SK-N-SH (cell line): ENCODE measurements at regions of chr12 and their contacts with region 1.

Region 1: DNA sequence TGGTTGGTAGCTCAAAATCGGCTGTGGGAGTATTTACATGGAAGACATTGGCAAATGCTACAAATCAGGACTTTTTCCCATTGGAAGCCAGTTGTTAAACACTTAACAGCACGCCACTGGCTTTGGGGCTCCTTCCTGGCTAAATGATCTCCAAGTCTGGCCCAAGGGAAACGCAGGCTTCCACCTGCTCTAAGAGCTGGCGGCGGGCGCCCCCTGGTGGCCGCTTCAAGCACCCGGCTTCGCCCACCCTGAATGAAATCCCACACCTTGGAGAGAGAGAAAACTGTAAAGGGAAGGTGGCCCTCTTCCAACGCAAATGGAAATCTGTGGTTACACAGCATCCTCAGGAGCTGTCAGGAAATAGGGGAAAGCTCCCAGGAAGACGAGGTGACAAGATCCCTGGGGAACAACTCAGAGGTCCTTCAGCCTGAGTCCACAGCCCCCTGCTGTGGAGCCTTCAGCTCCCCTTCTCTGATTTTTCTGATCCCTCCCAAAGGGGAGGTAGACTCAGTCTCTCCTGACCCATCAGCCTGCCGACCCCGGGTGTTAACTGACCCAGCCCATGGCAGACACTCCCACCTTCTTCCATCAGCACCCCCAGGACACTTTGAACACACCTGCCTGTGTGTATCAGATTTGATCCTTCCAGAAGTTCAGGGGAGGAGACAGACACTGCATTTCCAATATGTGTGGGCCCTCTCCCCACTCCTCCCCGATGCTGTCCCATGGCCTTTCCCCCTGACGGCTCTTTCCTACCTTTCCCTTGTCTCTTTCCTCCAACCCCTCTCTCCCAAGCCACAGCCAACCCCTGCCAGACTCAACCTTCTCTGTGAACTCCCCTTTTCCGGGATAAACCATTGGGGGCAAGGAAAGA is 15.4 kb downstream of the SELPLG start:
- DNase-seq: peak; percentile 86
- H3K4me3 ChIP-seq: peak overlapping the region in 1 of 2 experiments; percentile 30; a peak in 1 of 4 replicates
- H3K27ac ChIP-seq: no peak overlapping the region
- H3K4me1 ChIP-seq: no peaks in the 10 kb centered on the region; a peak in 2 of 4 replicates
- H3K27me3 ChIP-seq: no peaks in the 10 kb centered on the region
- CTCF ChIP-seq: peak; percentile 98
- EP300 ChIP-seq: no peak
- RAD21 ChIP-seq: peak; percentile 99

Region 2: DNA sequence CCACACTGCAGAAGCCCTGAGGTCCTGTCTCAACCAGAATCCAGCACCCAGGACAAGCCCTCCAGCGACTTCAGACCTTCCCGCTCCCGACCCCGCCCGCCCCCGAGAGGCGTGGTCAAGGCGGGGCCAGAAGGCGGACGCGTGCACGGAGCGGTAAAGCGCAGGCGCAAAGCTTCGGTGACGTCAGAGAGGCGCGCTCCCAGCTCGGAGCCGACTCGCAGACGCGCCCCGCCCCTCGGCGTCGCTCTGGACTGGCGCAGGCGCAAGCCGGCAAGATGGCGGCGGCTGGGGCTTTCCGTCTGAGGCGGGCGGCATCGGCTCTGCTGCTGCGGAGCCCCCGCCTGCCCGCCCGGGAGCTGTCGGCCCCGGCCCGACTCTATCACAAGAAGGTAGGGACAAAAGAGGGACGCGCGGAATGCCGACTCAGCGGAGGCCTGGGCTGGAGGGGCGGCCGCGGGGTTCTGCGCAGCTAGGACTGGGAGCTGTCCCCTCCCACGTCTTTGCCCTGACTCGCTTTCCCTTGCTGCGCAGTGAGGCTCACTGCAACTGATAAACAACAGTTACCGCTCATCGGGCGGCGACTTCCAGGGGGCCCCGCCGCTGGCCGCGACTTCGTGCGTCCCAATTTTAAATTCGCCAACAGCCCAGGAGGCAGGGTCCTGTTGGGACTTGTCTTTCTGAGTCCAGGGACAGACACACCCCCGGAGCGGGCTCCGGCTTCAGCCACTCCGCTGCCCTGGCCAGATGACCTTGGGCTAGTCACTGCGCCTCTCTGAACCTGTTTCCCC is 55.8 kb before region 1 on chr12 and contains the start of gene ISCU:
- CTCF ChIA-PET with region 1: interaction called, 503 read pairs
- POLR2A ChIA-PET with region 1: interaction called, 3 read pairs
- DNase-seq: peak; percentile 97
- H3K4me3 ChIP-seq: peak within 1 kb of the TSS; percentile 67 to 97
- H3K27ac ChIP-seq: peak within 1 kb of the TSS; percentile 81 to 95
- H3K4me1 ChIP-seq: peaks cover 33 to 43% of the 10 kb centered on the region in 2 experiments
- H3K27me3 ChIP-seq: no peaks in the 10 kb centered on the region
- CTCF ChIP-seq: no peak
- EP300 ChIP-seq: no peak
- RAD21 ChIP-seq: no peak
- polyA plus RNA-seq, gene ISCU: 165 and 166 TPM in 2 replicates

Region 3: GRCh38 chr12:108576660-108577234 is 41.6 kb before region 1 on chr12:
- CTCF ChIA-PET with region 1: interaction called, 503 read pairs
- POLR2A ChIA-PET with region 1: no interaction called
- DNase-seq: no peak
- H3K4me3 ChIP-seq: no peak overlapping the region
- H3K27ac ChIP-seq: no peak overlapping the region
- H3K4me1 ChIP-seq: no peaks in the 10 kb centered on the region
- H3K27me3 ChIP-seq: no peaks in the 10 kb centered on the region
- CTCF ChIP-seq: no peak
- EP300 ChIP-seq: no peak
- RAD21 ChIP-seq: no peak

Region 4: GRCh38 chr12:108583991-108584390 is 34.3 kb before region 1 on chr12:
- CTCF ChIA-PET with region 1: interaction called, 38 read pairs
- POLR2A ChIA-PET with region 1: no interaction called
- DNase-seq: no peak
- H3K4me3 ChIP-seq: no peak overlapping the region
- H3K27ac ChIP-seq: no peak overlapping the region
- H3K4me1 ChIP-seq: peaks cover 0 to 10% of the 10 kb centered on the region in 2 experiments; a peak in 1 of 4 replicates
- H3K27me3 ChIP-seq: no peaks in the 10 kb centered on the region
- CTCF ChIP-seq: no peak
- EP300 ChIP-seq: no peak
- RAD21 ChIP-seq: no peak

Region 5: DNA sequence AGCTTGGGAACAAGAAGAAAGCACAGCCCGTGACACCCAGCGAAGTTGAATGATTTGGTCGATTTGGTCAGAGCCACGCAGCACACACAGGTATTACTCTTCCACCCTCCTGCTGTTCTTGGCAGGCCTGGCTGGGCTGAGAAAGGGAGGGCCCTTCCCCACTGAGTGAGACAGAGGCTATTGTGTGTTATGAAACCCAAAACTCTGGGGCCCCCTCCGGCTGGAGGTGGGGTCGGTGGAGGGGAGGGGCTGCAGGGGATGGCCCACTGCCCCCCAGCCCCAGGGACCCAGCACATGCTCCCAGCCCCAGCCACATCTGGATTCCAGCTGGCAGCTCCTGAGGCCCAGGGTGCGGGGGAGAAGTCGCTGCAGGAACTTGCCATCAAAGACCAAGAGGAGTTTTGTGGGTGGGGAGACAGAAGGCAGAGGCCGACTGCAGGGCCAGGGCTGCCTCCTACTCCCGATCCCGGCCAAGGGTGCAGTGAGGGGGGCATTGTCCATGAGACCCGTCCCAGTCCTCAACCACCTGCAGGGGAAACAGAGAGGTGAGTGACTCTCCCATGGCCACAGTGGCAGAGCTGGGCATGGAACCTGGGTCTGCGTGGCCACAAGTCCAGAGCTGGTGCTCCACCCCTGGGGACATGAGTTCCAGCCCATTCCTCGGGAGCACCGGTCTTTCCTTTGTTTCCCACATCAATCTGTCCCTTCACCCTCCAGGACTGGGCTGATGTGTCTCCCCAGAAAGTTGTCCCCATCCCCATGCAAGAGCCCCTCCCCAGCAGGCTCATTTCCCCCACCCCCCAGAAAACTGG is 29.1 kb before region 1 on chr12:
- CTCF ChIA-PET with region 1: interaction called, 38 read pairs
- POLR2A ChIA-PET with region 1: no interaction called
- DNase-seq: peak; percentile 77
- H3K4me3 ChIP-seq: no peak overlapping the region
- H3K27ac ChIP-seq: peak overlapping the region in 1 of 2 experiments; percentile 29; a peak in 1 of 4 replicates
- H3K4me1 ChIP-seq: peaks cover 0 to 20% of the 10 kb centered on the region in 2 experiments; a peak in 1 of 4 replicates
- H3K27me3 ChIP-seq: no peaks in the 10 kb centered on the region
- CTCF ChIP-seq: no peak
- EP300 ChIP-seq: no peak
- RAD21 ChIP-seq: no peak

Region 6: DNA sequence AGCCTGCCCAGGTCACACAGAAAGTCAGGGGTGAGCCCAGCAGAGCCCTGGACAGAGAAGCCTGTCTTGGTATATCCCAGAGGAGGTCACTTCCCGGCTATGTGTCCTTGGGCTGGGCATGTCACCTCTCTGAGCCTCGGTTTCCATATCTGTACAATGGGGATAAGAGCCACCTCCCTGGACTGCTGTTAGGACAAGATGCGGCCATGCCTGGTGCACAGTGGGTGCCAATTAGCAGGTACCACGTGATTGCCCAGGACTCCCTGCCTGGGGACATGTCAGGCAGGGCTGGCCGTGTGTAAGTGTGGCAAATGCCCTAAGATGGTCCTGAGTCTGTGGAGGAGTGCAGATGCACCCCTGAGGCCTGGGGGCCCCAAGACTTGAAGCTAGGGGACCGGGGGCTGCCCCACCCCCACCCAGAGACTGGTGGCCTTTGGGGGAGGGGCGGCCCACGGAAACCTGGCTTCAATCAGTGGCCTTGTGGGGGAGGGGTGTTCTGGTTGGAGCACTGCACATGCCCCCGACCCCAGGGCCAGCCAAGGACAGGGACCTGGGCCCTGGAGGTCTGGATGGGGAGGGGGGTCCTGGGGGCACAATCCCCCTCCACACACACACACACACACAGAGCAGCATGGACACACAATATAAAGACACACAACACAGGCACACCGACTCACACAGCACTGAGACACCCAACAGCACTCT is 21.3 kb before region 1 on chr12:
- CTCF ChIA-PET with region 1: interaction called, 23 read pairs
- POLR2A ChIA-PET with region 1: no interaction called
- DNase-seq: peak; percentile 81
- H3K4me3 ChIP-seq: peak overlapping the region; percentile 45 to 60
- H3K27ac ChIP-seq: peak overlapping the region in 1 of 2 experiments; percentile 83; a peak in 2 of 4 replicates
- H3K4me1 ChIP-seq: peaks cover 0 to 26% of the 10 kb centered on the region in 2 experiments; a peak in 1 of 4 replicates
- H3K27me3 ChIP-seq: no peaks in the 10 kb centered on the region
- CTCF ChIP-seq: no peak
- EP300 ChIP-seq: peak in 1 of 2 experiments; percentile 43; a peak in 1 of 4 replicates
- RAD21 ChIP-seq: no peak

Region 7: DNA sequence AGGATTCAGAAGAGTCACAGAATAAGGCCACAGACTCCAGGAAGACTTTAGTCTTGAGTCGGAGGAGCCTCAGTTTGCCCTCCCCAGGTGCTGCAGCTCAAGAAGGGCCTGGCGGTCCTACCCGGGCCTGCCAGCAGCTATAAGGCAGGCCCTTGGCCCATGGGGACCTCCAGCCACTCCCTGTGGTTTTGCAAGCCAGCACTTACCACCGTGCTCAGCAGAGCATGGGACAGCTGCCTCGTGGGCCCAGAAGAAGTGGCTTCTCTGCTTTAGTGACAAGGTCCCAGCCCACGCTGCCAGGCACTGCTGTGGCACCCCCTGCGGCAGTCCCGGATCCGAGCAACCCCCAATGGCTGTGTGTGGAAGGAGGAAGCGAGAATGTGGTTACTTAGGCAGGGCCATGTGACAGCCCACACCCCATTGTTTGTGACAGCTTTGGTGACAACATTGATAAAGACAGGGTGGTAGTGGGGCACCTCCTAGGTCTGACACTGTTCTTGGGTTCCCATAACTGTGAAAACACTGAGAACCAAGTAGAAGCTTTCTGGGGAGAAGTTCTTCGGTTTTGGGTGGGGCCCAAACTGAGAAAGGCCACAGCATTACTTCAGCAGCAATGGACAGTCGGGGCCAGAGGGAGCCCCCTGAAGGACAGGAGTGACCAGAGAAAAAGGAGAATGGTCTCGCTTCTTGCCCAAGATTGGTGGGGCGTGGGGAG is 15.4 kb after region 1 on chr12 and contains the start of gene SELPLG:
- CTCF ChIA-PET with region 1: interaction called, 62 read pairs
- POLR2A ChIA-PET with region 1: no interaction called
- DNase-seq: no peak
- H3K4me3 ChIP-seq: no peak within 1 kb of the TSS
- H3K27ac ChIP-seq: no peak within 1 kb of the TSS
- H3K4me1 ChIP-seq: peaks cover 20% of the 10 kb centered on the region in 2 experiments; a peak in 3 of 4 replicates
- H3K27me3 ChIP-seq: no peaks in the 10 kb centered on the region
- CTCF ChIP-seq: no peak
- EP300 ChIP-seq: no peak
- RAD21 ChIP-seq: no peak
- polyA plus RNA-seq, gene SELPLG: 2.8 and 3.2 TPM in 2 replicates

Region 8: GRCh38 chr12:108838194-108839017 is 220.1 kb after region 1 on chr12:
- CTCF ChIA-PET with region 1: no interaction called
- POLR2A ChIA-PET with region 1: no interaction called
- DNase-seq: peak; percentile 64
- H3K4me3 ChIP-seq: no peak overlapping the region
- H3K27ac ChIP-seq: peak overlapping the region; percentile 98 to 100
- H3K4me1 ChIP-seq: peaks cover 36 to 63% of the 10 kb centered on the region in 2 experiments
- H3K27me3 ChIP-seq: no peaks in the 10 kb centered on the region
- CTCF ChIP-seq: no peak
- EP300 ChIP-seq: peak; percentile 79 to 99
- RAD21 ChIP-seq: no peak